Calu3 (cell line): ENCODE measurements at regions of chr12 and their contacts with region 1.

Region 1: DNA sequence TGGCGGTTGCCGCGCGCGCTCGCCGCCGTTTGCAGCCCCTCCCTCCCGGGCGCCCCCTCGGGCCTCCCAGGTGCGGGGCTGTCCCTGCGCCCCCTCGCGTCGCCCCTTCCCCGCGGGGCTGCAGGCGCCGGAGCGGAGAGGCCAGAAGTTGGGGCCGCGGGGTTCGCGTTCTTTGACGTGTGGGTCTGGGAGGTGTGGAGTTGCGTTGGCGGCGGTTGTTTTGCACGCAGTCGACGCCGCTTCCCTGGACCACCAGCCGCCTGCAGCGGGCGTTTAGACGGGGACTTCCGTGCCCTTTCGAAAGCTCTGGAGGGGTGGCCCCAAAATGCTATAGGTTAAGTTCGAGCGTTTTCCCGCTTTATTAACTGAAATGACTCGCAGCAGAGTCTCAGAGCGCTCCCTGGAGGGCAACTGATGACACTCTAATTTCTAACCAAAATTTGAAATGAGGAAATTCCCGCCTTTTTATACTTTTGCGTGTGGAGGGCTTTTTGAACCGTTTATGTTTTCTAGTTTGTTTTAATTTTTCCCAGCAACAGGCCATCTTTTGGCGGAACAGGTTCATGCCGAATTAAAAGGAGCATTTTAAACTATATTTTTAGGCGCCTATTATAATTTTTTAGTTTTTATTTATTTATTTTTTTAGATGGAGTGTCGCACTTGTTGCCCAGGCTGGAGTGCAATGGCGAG is 939 bp downstream of the TMPO start:
- DNase-seq: peak; percentile 86
- H3K4me3 Mint-ChIP-seq: peak overlapping the region; percentile 65
- H3K27ac Mint-ChIP-seq: peak overlapping the region; percentile 96
- H3K4me1 Mint-ChIP-seq: peaks cover 27% of the 10 kb centered on the region
- H3K27me3 Mint-ChIP-seq: no peaks in the 10 kb centered on the region
- CTCF ChIP-seq: no peak

Region 2: GRCh38 chr12:98424726-98425401 is 91.5 kb before region 1 on chr12:
- CTCF ChIA-PET with region 1: interaction called, 7 read pairs
- intact Hi-C with region 1: loop called (anchors 1 kb)
- DNase-seq: peak; percentile 83
- H3K4me3 Mint-ChIP-seq: no peak overlapping the region
- H3K27ac Mint-ChIP-seq: no peak overlapping the region
- H3K4me1 Mint-ChIP-seq: peaks cover 24% of the 10 kb centered on the region
- H3K27me3 Mint-ChIP-seq: no peaks in the 10 kb centered on the region
- CTCF ChIP-seq: peak; percentile 59

Region 3: DNA sequence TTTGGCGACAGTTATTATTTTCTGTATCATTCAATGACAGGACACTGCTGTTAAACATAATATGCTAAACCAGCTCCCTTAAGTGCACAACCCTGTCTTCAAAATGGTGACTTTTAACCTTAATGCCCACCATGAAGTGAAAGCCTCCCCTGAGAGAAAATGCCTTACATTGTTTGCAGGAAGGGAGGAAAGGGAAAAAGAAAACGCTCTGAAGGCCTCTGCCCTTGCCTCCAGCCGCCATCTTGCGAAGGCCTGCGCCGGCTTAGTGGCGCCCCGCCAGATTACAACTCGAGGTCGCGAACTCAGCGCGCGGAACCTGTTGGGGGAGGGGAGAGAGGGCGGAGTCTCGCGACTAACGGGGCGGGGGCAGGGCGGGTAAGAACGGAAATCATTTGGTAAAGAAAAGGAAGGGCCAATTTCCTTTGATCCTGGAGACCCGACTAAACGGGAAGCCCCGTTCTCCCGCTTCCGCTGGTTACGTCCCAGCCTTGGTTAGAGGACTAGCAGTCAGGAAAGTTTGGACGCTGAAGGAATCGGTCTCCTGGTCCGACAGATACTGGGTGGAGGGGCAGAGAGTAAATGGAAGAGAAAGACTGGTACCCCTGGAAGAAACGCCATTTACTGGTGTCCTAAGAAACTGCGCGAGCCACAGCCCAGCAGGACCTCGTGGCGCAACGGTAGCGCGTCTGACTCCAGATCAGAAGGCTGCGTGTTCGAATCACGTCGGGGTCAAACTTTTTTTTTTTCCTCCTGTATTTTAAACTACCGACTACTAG is 12.5 kb before region 1 on chr12:
- CTCF ChIA-PET with region 1: interaction called, 5 read pairs
- intact Hi-C with region 1: loop called (anchors 1 kb)
- DNase-seq: peak; percentile 96
- H3K4me3 Mint-ChIP-seq: peak overlapping the region; percentile 70
- H3K27ac Mint-ChIP-seq: peak overlapping the region; percentile 100
- H3K4me1 Mint-ChIP-seq: peaks cover 43% of the 10 kb centered on the region
- H3K27me3 Mint-ChIP-seq: peaks cover 15% of the 10 kb centered on the region
- CTCF ChIP-seq: no peak